Activated T-helper 1 cell treated with anti-CD3 and anti-CD28 coated beads, Interleukin-12 subunit alpha, Interleukin-12 subunit beta, Interleukin-2, Interleukin-4 antibody, amounts not matched to agents 30 ng/mL and 10 ng/mL and 1 ng/mL, durations not matched to agents 14 hours and 24 hours and 36 hours (primary cell): ENCODE measurements at regions of chr9 and their contacts with region 1.

Region 1: GRCh38 chr9:71911253-71912074 is at the start of gene C9orf85:
- DNase-seq: peak; percentile 97
- H3K4me3 Mint-ChIP-seq: peak within 1 kb of the TSS; percentile 99
- H3K27ac Mint-ChIP-seq: peak within 1 kb of the TSS; percentile 96
- H3K4me1 Mint-ChIP-seq: peaks cover 64% of the 10 kb centered on the region
- H3K27me3 Mint-ChIP-seq: no peaks in the 10 kb centered on the region
- total RNA-seq, gene C9orf85: 9.3 and 9.8 TPM in 2 replicates

Region 2: DNA sequence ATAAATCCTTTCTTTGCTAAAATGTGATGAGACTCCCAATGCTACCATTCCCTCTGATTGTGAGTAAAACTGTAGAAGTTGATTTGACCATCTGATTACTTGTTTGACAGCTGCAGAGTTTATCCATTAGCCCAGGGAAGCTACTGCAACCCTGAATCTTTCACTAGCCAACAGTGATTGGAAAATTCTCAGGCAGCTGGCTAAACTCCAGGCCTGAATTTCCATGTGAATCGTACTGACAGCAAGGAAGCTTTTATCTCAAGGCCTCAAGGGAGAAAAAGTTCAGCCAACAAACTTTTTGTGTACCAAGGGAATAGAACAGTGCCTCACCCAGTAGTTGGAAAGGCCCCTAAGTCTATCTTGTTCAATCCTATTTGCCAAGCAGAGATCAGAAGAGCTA is 543.3 kb before region 1 on chr9:
- intact Hi-C with region 1: no loop called
- DNase-seq: no peak
- H3K4me3 Mint-ChIP-seq: no peak overlapping the region
- H3K27ac Mint-ChIP-seq: no peak overlapping the region
- H3K4me1 Mint-ChIP-seq: no peaks in the 10 kb centered on the region
- H3K27me3 Mint-ChIP-seq: peaks cover 3% of the 10 kb centered on the region

Region 3: GRCh38 chr9:71604197-71605063 is 307.0 kb before region 1 on chr9:
- intact Hi-C with region 1: loop called (anchors 5 kb)
- DNase-seq: peak; percentile 65
- H3K4me3 Mint-ChIP-seq: no peak overlapping the region
- H3K27ac Mint-ChIP-seq: no peak overlapping the region
- H3K4me1 Mint-ChIP-seq: no peaks in the 10 kb centered on the region
- H3K27me3 Mint-ChIP-seq: peaks cover 9% of the 10 kb centered on the region

Region 4: DNA sequence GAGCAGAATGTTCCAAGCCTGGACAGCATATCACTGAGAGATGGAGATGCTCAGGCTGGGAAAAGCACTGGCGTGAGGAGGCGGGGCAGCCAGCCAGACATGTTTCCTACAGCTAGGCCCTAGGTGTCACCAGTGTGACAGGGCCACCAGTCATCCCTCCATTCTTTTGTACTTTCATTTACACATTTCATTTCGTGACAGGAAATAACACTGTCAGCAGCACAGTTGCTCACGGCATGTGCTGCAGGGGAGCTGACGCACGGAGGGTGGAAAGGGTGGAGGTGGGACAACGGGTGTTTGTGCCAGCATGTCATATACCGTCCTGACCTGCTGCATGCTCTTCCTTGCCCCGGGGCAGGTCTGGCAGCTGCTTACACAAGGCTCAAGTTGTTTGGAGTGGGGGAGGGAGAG is 128.3 kb before region 1 on chr9:
- intact Hi-C with region 1: loop called (anchors 1 kb)
- DNase-seq: peak; percentile 80
- H3K4me3 Mint-ChIP-seq: peak overlapping the region; percentile 63
- H3K27ac Mint-ChIP-seq: peak overlapping the region; percentile 93
- H3K4me1 Mint-ChIP-seq: peaks cover 42% of the 10 kb centered on the region
- H3K27me3 Mint-ChIP-seq: peaks cover 2% of the 10 kb centered on the region

Region 5: DNA sequence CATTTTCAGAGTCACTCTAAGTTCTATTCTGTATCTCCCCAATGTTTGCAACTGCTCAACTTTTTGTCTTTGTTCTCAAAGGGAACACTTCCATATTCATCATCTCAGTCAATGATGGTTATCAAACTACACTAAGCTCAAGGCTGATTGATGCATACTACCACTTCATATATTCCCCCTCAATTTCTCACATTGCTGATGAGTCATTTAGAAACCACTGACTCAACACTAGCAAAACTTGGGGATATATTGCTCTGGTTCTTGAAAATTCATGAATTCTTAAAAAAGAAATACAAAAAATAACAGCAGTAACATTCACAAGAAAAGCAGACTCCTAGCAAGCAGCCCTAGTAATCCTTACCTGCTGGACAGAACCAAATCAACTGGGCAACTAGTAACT is 52.7 kb before region 1 on chr9:
- intact Hi-C with region 1: loop called (anchors 1 kb)
- DNase-seq: peak; percentile 3
- H3K4me3 Mint-ChIP-seq: peak overlapping the region; percentile 0
- H3K27ac Mint-ChIP-seq: peak overlapping the region; percentile 51
- H3K4me1 Mint-ChIP-seq: peaks cover 25% of the 10 kb centered on the region
- H3K27me3 Mint-ChIP-seq: no peaks in the 10 kb centered on the region

Region 6: GRCh38 chr9:71897577-71897976 is 13.9 kb before region 1 on chr9:
- intact Hi-C with region 1: loop called (anchors 1 kb)
- DNase-seq: no peak
- H3K4me3 Mint-ChIP-seq: peak overlapping the region; percentile 35
- H3K27ac Mint-ChIP-seq: peak overlapping the region; percentile 61
- H3K4me1 Mint-ChIP-seq: peaks cover 88% of the 10 kb centered on the region
- H3K27me3 Mint-ChIP-seq: no peaks in the 10 kb centered on the region

Region 7: GRCh38 chr9:72025931-72026342 is 114.5 kb after region 1 on chr9:
- intact Hi-C with region 1: loop called (anchors 2 kb)
- DNase-seq: no peak
- H3K4me3 Mint-ChIP-seq: no peak overlapping the region
- H3K27ac Mint-ChIP-seq: no peak overlapping the region
- H3K4me1 Mint-ChIP-seq: peaks cover 5% of the 10 kb centered on the region
- H3K27me3 Mint-ChIP-seq: no peaks in the 10 kb centered on the region